Heart left ventricle (tissue), 16 donors: ENCODE measurements at regions of chr5 and their contacts with region 1.

Region 1: GRCh38 chr5:64612344-64612961 is 77.8 kb upstream of the SHISAL2B start:
- DNase-seq: peak in 3 of 5 donors; percentile 28 to 40 (median 32)
- ATAC-seq: peak in 3 of 4 donors; percentile 60 to 68 (median 68)
- H3K4me3 ChIP-seq: no peak overlapping the region
- H3K27ac ChIP-seq: no peak overlapping the region
- H3K4me1 ChIP-seq: peaks cover 0 to 5% (median 0%) of the 10 kb centered on the region in 12 donors
- H3K27me3 ChIP-seq: no peaks in the 10 kb centered on the region
- CTCF ChIP-seq: peak; percentile 43 to 82 (median 73)
- POLR2A ChIP-seq: no peak

Region 2: DNA sequence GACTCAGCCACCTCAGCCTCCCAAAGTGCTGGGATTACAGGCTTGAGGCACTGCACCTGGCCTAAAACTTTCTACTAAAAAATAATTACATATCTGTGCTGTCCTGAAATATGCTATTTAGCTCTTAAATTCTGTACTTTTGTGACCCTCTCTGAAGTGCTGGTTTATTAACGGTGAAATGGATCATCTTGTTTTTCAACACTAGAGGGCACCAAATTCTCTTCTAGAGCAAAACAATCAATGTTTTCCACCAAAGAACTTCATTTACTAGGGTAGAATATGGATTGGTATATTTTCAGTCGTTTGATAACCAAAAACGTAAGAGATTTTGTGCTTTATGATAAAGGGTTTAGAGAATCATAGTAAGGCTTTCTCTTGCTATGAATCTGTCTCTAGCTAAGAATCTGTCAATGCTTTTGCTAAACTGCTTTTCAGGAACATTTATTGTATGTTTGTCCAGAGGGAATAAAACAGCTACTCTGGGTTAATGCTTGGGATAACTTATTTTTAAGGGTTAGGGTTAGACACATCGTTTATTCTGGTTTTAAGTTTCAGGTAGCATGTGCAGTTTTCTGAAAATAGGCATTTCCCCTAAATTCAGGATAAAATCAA is 383.2 kb before region 1 on chr5:
- intact Hi-C with region 1: loop called in 9 of 10 experiments (anchors 2 to 5 kb)
- DNase-seq: no peak
- ATAC-seq: no peak
- H3K4me3 ChIP-seq: no peak overlapping the region
- H3K27ac ChIP-seq: no peak overlapping the region
- H3K4me1 ChIP-seq: no peaks in the 10 kb centered on the region
- H3K27me3 ChIP-seq: no peaks in the 10 kb centered on the region
- CTCF ChIP-seq: peak; percentile 51 to 78 (median 61)
- POLR2A ChIP-seq: no peak

Region 3: GRCh38 chr5:64347309-64347708 is 265.1 kb before region 1 on chr5:
- intact Hi-C with region 1: loop called in 2 of 10 experiments (anchors 5 to 10 kb)
- DNase-seq: no peak
- ATAC-seq: no peak
- H3K4me3 ChIP-seq: no peak overlapping the region
- H3K27ac ChIP-seq: no peak overlapping the region
- H3K4me1 ChIP-seq: peaks cover 0 to 26% (median 0%) of the 10 kb centered on the region in 12 donors
- H3K27me3 ChIP-seq: no peaks in the 10 kb centered on the region
- CTCF ChIP-seq: peak in 2 of 12 donors; percentile 13 to 18
- POLR2A ChIP-seq: no peak

Region 4: DNA sequence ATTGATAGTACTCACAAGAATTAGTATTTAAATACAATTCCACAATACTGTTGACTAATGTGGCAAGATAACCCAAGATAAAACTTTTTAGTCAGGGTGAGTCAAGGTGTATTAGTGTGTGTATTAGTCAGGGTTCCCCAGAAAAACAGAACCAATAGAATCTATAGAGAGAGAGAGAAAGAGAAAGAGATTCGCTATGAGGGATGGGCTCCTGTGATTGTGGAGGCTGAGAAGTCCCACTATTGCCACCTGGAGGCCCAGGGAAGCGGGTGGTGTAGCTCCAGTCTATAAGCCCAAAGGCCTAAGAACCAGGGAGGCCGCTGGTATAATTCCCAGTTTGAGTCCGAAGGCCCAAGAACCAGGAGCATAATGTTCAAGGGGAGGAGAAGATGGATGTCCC is 67.8 kb after region 1 on chr5:
- intact Hi-C with region 1: no loop called
- DNase-seq: no peak
- ATAC-seq: no peak
- H3K4me3 ChIP-seq: no peak overlapping the region
- H3K27ac ChIP-seq: no peak overlapping the region
- H3K4me1 ChIP-seq: no peaks in the 10 kb centered on the region
- H3K27me3 ChIP-seq: peaks cover 0 to 3% (median 0%) of the 10 kb centered on the region in 9 donors
- CTCF ChIP-seq: no peak
- POLR2A ChIP-seq: no peak